ENCODE measurements at regions of chr10 and their contacts with region 1.

Region 1: DNA sequence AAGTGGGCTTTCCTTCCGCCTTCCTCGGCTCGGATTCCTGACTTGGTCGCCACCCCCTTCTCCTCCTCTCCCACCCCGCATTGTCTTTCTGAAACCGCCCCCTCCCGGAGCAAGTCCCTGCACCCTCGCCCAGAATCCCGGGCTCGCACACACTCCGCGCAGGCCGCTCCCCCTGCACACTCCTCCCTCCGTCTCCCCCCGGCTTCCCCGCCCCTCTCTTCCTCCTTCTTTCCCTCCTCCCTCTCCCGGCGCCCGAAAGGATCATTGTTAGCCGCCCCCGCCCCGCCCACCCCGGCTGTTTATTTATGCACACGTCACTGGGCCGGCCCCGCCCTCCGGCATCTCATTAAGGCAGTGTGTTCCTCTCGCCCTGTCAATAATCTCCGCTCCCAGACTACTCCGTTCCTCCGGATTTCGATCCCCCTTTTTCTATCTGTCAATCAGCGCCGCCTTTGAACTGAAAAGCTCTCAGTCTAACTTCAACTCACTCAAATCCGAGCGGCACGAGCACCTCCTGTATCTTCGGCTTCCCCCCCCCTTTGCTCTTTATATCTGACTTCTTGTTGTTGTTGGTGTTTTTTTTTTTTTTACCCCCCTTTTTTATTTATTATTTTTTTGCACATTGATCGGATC is at the start of gene TCF7L2:
- DNase-seq: peak; percentile 97
- H3K4me3 ChIP-seq: peak within 1 kb of the TSS; percentile 73 to 100 (median 98)
- H3K27ac ChIP-seq: peak within 1 kb of the TSS; percentile 91
- H3K4me1 ChIP-seq: peaks cover 26% of the 10 kb centered on the region
- H3K27me3 ChIP-seq: no peaks in the 10 kb centered on the region
- CTCF ChIP-seq: peak in 1 of 2 donors; percentile 6
- POLR2A ChIP-seq: no peak
- total RNA-seq, gene TCF7L2: 21.8 and 22.1 TPM in 2 replicates

Region 2: DNA sequence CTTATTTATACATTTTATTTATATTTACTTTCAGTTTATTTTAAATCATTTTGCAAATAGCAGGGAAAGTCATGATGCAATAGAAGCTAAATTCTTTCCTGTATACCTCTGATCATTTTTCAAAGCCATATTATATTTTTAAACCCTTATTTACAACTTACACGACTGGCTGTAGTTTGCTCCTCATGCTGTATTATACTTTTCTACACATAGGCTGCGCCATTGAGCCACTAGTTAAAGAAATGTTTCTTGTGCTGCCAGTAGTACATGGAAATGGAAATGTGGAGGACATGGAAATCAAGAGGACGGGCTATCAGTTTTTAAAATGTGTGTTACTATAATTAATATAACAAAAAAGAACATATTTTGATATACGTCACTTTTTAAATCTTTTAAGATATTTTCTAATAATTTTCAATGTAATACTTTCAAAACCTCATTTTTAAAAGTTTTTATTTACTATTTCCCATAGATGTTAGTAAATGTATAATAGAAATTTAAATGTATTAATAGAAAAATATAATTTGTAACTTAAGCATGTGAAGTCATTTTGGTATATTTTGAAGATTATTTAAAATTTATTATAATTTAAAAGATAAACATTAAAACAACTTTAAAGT is 384.4 kb before region 1 on chr10:
- CTCF ChIA-PET with region 1: no interaction called
- POLR2A ChIA-PET with region 1: no interaction called
- dilution Hi-C with region 1: no loop called
- intact Hi-C with region 1: loop called (anchors 5 kb)
- DNase-seq: peak; percentile 87
- H3K4me3 ChIP-seq: no peak overlapping the region
- H3K27ac ChIP-seq: no peak overlapping the region
- H3K4me1 ChIP-seq: no peaks in the 10 kb centered on the region
- H3K27me3 ChIP-seq: no peaks in the 10 kb centered on the region
- CTCF ChIP-seq: peak; percentile 53
- POLR2A ChIP-seq: no peak

Region 3: GRCh38 chr10:112811740-112812551 is 138.0 kb before region 1 on chr10:
- CTCF ChIA-PET with region 1: no interaction called
- POLR2A ChIA-PET with region 1: no interaction called
- dilution Hi-C with region 1: no loop called
- intact Hi-C with region 1: loop called (anchors 5 kb)
- DNase-seq: peak; percentile 69
- H3K4me3 ChIP-seq: no peak overlapping the region
- H3K27ac ChIP-seq: no peak overlapping the region
- H3K4me1 ChIP-seq: peaks cover 13% of the 10 kb centered on the region
- H3K27me3 ChIP-seq: no peaks in the 10 kb centered on the region
- CTCF ChIP-seq: no peak
- POLR2A ChIP-seq: no peak

Region 4: GRCh38 chr10:113052076-113052830 is 102.3 kb after region 1 on chr10:
- CTCF ChIA-PET with region 1: interaction called, 3 read pairs
- POLR2A ChIA-PET with region 1: no interaction called
- dilution Hi-C with region 1: no loop called
- intact Hi-C with region 1: loop called (anchors 2 kb)
- DNase-seq: no peak
- H3K4me3 ChIP-seq: no peak overlapping the region
- H3K27ac ChIP-seq: no peak overlapping the region
- H3K4me1 ChIP-seq: peaks cover 40% of the 10 kb centered on the region
- H3K27me3 ChIP-seq: no peaks in the 10 kb centered on the region
- CTCF ChIP-seq: peak; percentile 21 to 24
- POLR2A ChIP-seq: no peak

Region 5: GRCh38 chr10:113087165-113088029 is 137.4 kb after region 1 on chr10:
- CTCF ChIA-PET with region 1: interaction called, 6 read pairs
- POLR2A ChIA-PET with region 1: no interaction called
- dilution Hi-C with region 1: no loop called
- intact Hi-C with region 1: loop called (anchors 1 kb)
- DNase-seq: peak; percentile 99
- H3K4me3 ChIP-seq: no peak overlapping the region
- H3K27ac ChIP-seq: peak overlapping the region; percentile 90
- H3K4me1 ChIP-seq: peaks cover 28% of the 10 kb centered on the region
- H3K27me3 ChIP-seq: no peaks in the 10 kb centered on the region
- CTCF ChIP-seq: no peak
- POLR2A ChIP-seq: no peak

Region 6: GRCh38 chr10:113563306-113564088 is 613.5 kb after region 1 on chr10:
- CTCF ChIA-PET with region 1: no interaction called
- POLR2A ChIA-PET with region 1: no interaction called
- dilution Hi-C with region 1: no loop called
- intact Hi-C with region 1: loop called (anchors 5 kb)
- DNase-seq: peak; percentile 68
- H3K4me3 ChIP-seq: peak overlapping the region in 2 of 3 experiments; percentile 41
- H3K27ac ChIP-seq: no peak overlapping the region
- H3K4me1 ChIP-seq: peaks cover 8% of the 10 kb centered on the region
- H3K27me3 ChIP-seq: no peaks in the 10 kb centered on the region
- CTCF ChIP-seq: peak; percentile 97 to 99
- POLR2A ChIP-seq: no peak

Measured in endothelial cell of umbilical vein (primary cell).